ENCODE measurements at regions of chr18 and their contacts with region 1.

Region 1: DNA sequence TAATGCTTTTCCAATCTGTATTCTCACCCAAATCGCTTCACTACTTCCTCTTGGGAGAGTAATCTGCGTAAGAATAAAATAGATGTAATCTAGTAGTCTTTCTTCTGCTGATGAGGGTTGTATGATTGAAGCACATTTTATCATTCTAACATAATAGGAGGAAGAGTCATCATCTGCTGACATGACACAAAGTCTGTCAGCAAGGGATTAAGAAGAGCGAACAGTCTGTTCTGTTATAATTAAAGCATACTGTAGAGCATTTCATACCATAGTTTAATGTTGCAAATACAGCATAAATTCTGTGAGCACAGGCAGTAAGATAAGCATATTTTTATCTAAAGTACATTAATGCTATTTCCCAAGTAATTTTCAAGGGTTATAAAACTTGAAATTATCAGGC is 10.4 kb downstream of the SLC25A52 start:
- DNase-seq: no peak
- H3K4me3 Mint-ChIP-seq: no peak overlapping the region
- H3K27ac Mint-ChIP-seq: no peak overlapping the region
- H3K4me1 Mint-ChIP-seq: no peaks in the 10 kb centered on the region
- H3K27me3 Mint-ChIP-seq: peaks cover 49% of the 10 kb centered on the region
- CTCF ChIP-seq: no peak

Region 2: GRCh38 chr18:31716362-31716761 is 33.9 kb before region 1 on chr18:
- CTCF ChIA-PET with region 1: no interaction called
- intact Hi-C with region 1: loop called (anchors 1 kb)
- DNase-seq: no peak
- H3K4me3 Mint-ChIP-seq: no peak overlapping the region
- H3K27ac Mint-ChIP-seq: no peak overlapping the region
- H3K4me1 Mint-ChIP-seq: peaks cover 8% of the 10 kb centered on the region
- H3K27me3 Mint-ChIP-seq: no peaks in the 10 kb centered on the region
- CTCF ChIP-seq: no peak

Region 3: GRCh38 chr18:31774477-31774785 is 24.2 kb after region 1 on chr18:
- CTCF ChIA-PET with region 1: no interaction called
- intact Hi-C with region 1: no loop called
- DNase-seq: no peak
- H3K4me3 Mint-ChIP-seq: no peak overlapping the region
- H3K27ac Mint-ChIP-seq: no peak overlapping the region
- H3K4me1 Mint-ChIP-seq: no peaks in the 10 kb centered on the region
- H3K27me3 Mint-ChIP-seq: peaks cover 4% of the 10 kb centered on the region
- CTCF ChIP-seq: no peak

Region 4: GRCh38 chr18:31965316-31965970 is 215.2 kb after region 1 on chr18:
- CTCF ChIA-PET with region 1: no interaction called
- intact Hi-C with region 1: no loop called
- DNase-seq: no peak
- H3K4me3 Mint-ChIP-seq: no peak overlapping the region
- H3K27ac Mint-ChIP-seq: no peak overlapping the region
- H3K4me1 Mint-ChIP-seq: no peaks in the 10 kb centered on the region
- H3K27me3 Mint-ChIP-seq: no peaks in the 10 kb centered on the region
- CTCF ChIP-seq: no peak

Measured in Calu3 (cell line).